Motor neuron (in vitro differentiated cells): ENCODE measurements at regions of chr3 and their contacts with region 1.

Region 1: GRCh38 chr3:161220850-161221753 is at the start of gene NMD3:
- ATAC-seq: peak; percentile 93 to 98 (median 95)
- H3K4me3 ChIP-seq: peak within 1 kb of the TSS; percentile 70 to 96 (median 80)
- H3K27ac ChIP-seq: peak within 1 kb of the TSS; percentile 87 to 91
- H3K4me1 ChIP-seq: peaks cover 13 to 16% of the 10 kb centered on the region in 2 donors
- total RNA-seq, gene NMD3: 45.5 to 115 (median 66.7) TPM

Region 2: DNA sequence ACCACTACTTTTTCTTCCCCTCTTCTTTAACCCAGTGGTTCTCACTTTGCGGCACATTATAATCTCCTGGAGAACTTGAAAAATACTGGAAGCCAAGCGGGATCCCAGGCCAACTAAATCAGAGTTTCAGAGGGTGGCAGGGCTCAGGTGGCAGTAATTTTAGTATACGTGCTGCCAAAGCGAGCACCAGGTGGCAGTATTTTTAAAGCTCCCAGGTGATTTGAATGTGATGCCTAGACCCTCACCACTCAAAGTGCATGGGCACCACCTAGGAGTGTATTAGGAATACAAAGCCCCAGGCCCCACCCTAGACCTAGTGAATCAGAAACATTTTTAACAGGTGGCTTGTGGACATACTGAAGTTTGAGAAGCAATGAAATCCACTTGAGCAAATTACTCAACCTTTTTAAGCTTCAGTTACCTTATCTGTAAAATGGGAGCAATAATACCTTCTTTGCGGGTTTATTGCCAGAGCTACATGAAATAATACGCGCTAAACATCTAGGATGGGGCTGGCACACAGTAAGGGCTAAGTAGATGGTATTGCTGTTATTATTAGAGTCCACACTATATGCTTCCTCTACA is 124.2 kb before region 1 on chr3:
- in situ Hi-C with region 1: loop called in 1 of 9 experiments (anchors 25 kb)
- ATAC-seq: no peak
- H3K4me3 ChIP-seq: no peak overlapping the region
- H3K27ac ChIP-seq: no peak overlapping the region
- H3K4me1 ChIP-seq: no peaks in the 10 kb centered on the region